Activated CD8-positive, alpha-beta T cell treated with anti-CD3 and anti-CD28 coated beads for 36 hours (primary cell): ENCODE measurements at regions of chr1 and their contacts with region 1.

Region 1: GRCh38 chr1:200510228-200510623 is 100.4 kb upstream of the ZNF281 start:
- DNase-seq: peak; percentile 81
- ATAC-seq: peak; percentile 84
- H3K4me3 Mint-ChIP-seq: no peak overlapping the region
- H3K27ac Mint-ChIP-seq: no peak overlapping the region
- H3K4me1 Mint-ChIP-seq: no peaks in the 10 kb centered on the region
- H3K27me3 Mint-ChIP-seq: peaks cover 2% of the 10 kb centered on the region
- CTCF ChIP-seq: peak; percentile 98

Region 2: GRCh38 chr1:199684686-199685273 is 825.4 kb before region 1 on chr1:
- CTCF ChIA-PET with region 1: interaction called, 15 read pairs
- POLR2A ChIA-PET with region 1: no interaction called
- intact Hi-C with region 1: loop called (anchors 2 kb)
- DNase-seq: peak; percentile 45
- ATAC-seq: peak; percentile 83
- H3K4me3 Mint-ChIP-seq: no peak overlapping the region
- H3K27ac Mint-ChIP-seq: no peak overlapping the region
- H3K4me1 Mint-ChIP-seq: no peaks in the 10 kb centered on the region
- H3K27me3 Mint-ChIP-seq: peaks cover 13% of the 10 kb centered on the region
- CTCF ChIP-seq: peak; percentile 74

Region 3: GRCh38 chr1:200279810-200280411 is 230.3 kb before region 1 on chr1:
- CTCF ChIA-PET with region 1: interaction called, 12 read pairs
- POLR2A ChIA-PET with region 1: no interaction called
- intact Hi-C with region 1: no loop called
- DNase-seq: peak; percentile 51
- ATAC-seq: no peak
- H3K4me3 Mint-ChIP-seq: no peak overlapping the region
- H3K27ac Mint-ChIP-seq: no peak overlapping the region
- H3K4me1 Mint-ChIP-seq: no peaks in the 10 kb centered on the region
- H3K27me3 Mint-ChIP-seq: peaks cover 2% of the 10 kb centered on the region
- CTCF ChIP-seq: peak; percentile 74

Region 4: DNA sequence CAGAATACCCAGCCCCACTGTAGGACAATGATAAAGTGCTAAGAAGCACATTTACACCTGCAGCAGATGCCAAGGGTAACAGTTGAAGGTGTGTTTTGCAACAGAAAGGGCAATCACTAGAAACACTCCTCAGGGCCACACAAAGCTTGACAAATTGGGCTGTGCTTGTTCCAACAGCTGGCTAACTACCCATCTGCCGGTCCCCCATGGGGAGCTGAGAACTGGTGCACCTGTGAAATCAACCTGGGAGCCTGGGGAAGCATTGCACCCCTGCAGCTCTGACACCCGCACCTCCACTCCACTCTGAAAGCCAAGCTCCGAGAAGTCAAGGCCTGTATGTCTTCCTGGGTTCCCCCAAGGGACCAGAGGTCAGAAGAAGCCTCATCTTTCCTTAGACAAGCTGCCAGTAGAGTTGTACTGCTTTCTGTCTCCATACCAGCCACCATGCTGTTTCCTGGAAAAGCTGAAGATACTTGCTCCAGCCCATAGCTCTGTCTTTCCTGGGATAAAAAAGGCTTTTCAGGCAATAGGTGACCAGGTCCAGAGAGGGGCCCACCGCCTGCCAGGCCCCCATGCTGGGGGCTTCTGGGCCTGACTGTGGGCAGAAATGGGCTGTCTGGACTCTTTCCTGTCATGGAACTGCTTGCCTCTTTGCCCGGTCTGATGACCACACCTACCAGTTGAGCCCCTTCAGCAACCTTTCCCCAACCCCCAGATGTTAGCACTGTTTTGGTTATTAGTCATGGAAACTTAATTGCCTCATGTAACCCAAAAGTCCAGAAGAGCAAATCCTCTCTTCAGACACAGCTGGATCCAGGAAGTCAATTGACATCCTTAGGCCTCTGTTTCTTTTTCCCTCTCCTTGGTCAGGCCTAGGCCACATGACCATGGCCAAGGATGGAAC is 16.7 kb after region 1 on chr1:
- CTCF ChIA-PET with region 1: interaction called, 18 read pairs
- POLR2A ChIA-PET with region 1: no interaction called
- intact Hi-C with region 1: no loop called
- DNase-seq: no peak
- ATAC-seq: no peak
- H3K4me3 Mint-ChIP-seq: no peak overlapping the region
- H3K27ac Mint-ChIP-seq: no peak overlapping the region
- H3K4me1 Mint-ChIP-seq: peaks cover 28% of the 10 kb centered on the region
- H3K27me3 Mint-ChIP-seq: no peaks in the 10 kb centered on the region
- CTCF ChIP-seq: no peak